Naive thymus-derived CD4-positive, alpha-beta T cell (primary cell): ENCODE measurements at regions of chr16 and their contacts with region 1.

Region 1: DNA sequence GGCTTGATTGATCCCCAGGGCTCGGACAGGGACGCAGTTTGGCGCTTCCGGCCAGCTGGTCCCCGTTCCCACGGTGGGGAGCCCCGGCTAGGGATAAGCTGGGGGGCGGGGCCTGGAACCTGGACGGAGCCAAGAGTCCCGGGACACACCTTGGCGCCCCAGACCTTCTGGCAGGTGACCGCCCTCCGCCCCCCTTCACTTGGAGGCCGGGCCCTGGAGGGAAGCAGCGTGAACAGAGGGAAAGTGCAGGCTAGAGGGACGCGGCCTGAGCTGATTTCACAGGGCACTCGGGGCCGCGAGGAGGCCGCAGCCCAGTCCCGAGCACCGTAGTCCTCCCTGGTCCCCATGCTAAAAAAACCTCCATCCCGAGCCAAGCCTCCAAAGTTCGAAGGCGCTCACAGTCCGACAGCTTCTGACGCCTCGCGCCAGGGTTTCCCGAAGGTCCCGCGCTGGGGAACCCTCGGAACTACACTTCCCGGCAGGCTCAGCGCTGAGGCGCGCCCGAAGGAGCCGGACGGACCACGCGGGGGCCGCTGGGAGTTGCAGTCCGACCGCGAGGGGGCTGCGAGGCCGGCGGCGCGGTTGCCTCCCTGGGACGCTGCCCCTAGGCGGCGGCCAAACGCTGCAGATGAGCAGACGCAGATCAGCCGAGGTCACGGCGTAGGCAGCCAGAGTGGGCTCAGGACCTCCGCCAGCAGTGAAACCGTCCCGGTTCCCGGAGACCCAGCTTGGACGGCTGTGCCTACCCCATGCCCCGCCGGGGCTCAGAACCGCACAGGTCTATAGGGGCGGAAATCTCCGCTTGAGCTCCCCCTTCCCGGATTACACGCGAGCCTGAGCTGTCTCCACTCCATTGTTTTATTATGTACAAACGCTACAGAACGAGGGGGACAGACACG is at the start of gene TBX6:
- DNase-seq: peak; percentile 85 to 96 (median 91)
- ATAC-seq: peak; percentile 87
- H3K4me3 ChIP-seq: peak within 1 kb of the TSS; percentile 60
- H3K4me3 Mint-ChIP-seq: peak within 1 kb of the TSS; percentile 87 to 96 (median 93)
- H3K27ac ChIP-seq: peak within 1 kb of the TSS; percentile 77
- H3K27ac Mint-ChIP-seq: peak within 1 kb of the TSS; percentile 92 to 97 (median 95)
- H3K4me1 ChIP-seq: peaks cover 32 to 47% of the 10 kb centered on the region in 2 donors
- H3K4me1 Mint-ChIP-seq: peaks cover 43 to 65% (median 50%) of the 10 kb centered on the region in 7 donors
- H3K27me3 ChIP-seq: no peaks in the 10 kb centered on the region
- H3K27me3 Mint-ChIP-seq: no peaks in the 10 kb centered on the region
- total RNA-seq, gene TBX6: 1.5 to 3.3 (median 1.6) TPM

Region 2: DNA sequence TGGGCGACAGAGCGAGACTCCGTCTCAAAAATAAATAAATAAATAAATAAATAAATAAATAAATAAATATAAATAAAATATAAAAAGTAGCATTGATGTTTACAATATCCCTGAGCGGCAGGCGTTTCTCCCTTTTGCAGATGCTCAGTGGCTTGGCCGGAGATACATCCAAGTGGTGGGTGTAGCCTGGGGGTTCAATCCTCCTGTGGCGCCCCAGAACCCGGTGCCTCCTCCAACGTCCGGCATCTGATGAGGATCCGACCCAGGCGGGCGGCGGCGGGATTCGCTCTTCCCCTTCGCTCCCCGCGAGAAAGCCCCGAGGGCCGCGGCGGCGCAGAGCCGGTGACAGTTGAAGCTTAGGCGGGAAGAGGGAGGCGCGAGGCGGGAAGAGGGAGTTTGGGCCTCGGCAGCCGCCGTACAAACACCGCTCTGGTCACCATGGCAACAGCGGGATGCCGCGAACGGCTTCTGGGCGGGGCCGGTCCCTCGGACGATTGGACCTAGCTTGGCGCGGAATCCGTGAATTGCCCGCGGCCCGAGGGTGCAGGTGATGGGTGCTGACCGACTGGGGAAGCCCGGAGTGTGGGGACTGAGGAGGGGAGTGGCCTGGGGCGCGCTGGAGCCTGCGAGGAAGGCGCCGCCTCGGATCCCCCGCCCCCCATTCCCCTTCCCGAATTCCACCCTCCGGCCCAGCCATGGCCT is 38.9 kb before region 1 on chr16:
- CTCF ChIA-PET with region 1: interaction called, 3 read pairs
- POLR2A ChIA-PET with region 1: interaction called, 8 read pairs
- intact Hi-C with region 1: loop called in 1 of 2 experiments (anchors 5 kb)
- DNase-seq: peak; percentile 70 to 96 (median 80)
- ATAC-seq: peak; percentile 87
- H3K4me3 ChIP-seq: peak overlapping the region; percentile 51
- H3K4me3 Mint-ChIP-seq: peak overlapping the region; percentile 82 to 90 (median 86)
- H3K27ac ChIP-seq: peak overlapping the region; percentile 51
- H3K27ac Mint-ChIP-seq: peak overlapping the region in 7 of 9 donors; percentile 58 to 86 (median 80)
- H3K4me1 ChIP-seq: peaks cover 4 to 5% of the 10 kb centered on the region in 2 donors
- H3K4me1 Mint-ChIP-seq: peaks cover 6 to 35% (median 24%) of the 10 kb centered on the region in 7 donors
- H3K27me3 ChIP-seq: no peaks in the 10 kb centered on the region
- H3K27me3 Mint-ChIP-seq: no peaks in the 10 kb centered on the region

Region 3: GRCh38 chr16:30112197-30113030 is 20.7 kb after region 1 on chr16:
- CTCF ChIA-PET with region 1: interaction called, 5 read pairs
- POLR2A ChIA-PET with region 1: interaction called, 18 read pairs
- intact Hi-C with region 1: no loop called
- DNase-seq: peak in 7 of 9 donors; percentile 31 to 76 (median 35)
- ATAC-seq: peak; percentile 60
- H3K4me3 ChIP-seq: no peak overlapping the region
- H3K4me3 Mint-ChIP-seq: no peak overlapping the region
- H3K27ac ChIP-seq: no peak overlapping the region
- H3K27ac Mint-ChIP-seq: peak overlapping the region in 2 of 9 donors; percentile 12 to 38
- H3K4me1 ChIP-seq: no peaks in the 10 kb centered on the region
- H3K4me1 Mint-ChIP-seq: peaks cover 6 to 15% (median 11%) of the 10 kb centered on the region in 7 donors
- H3K27me3 ChIP-seq: no peaks in the 10 kb centered on the region
- H3K27me3 Mint-ChIP-seq: no peaks in the 10 kb centered on the region

Region 4: GRCh38 chr16:30183233-30184095 is 91.7 kb after region 1 on chr16 and contains the start of gene CORO1A:
- CTCF ChIA-PET with region 1: interaction called, 16 read pairs
- POLR2A ChIA-PET with region 1: interaction called, 216 read pairs
- intact Hi-C with region 1: loop called in 1 of 2 experiments (anchors 1 kb)
- DNase-seq: peak; percentile 71 to 89 (median 85)
- ATAC-seq: peak; percentile 72
- H3K4me3 ChIP-seq: peak within 1 kb of the TSS; percentile 100
- H3K4me3 Mint-ChIP-seq: peak within 1 kb of the TSS; percentile 96 to 99 (median 98)
- H3K27ac ChIP-seq: peak within 1 kb of the TSS; percentile 85
- H3K27ac Mint-ChIP-seq: peak within 1 kb of the TSS; percentile 91 to 97 (median 96)
- H3K4me1 ChIP-seq: peaks cover 28 to 36% of the 10 kb centered on the region in 2 donors
- H3K4me1 Mint-ChIP-seq: peaks cover 19 to 36% (median 28%) of the 10 kb centered on the region in 7 donors
- H3K27me3 ChIP-seq: no peaks in the 10 kb centered on the region
- H3K27me3 Mint-ChIP-seq: no peaks in the 10 kb centered on the region
- total RNA-seq, gene CORO1A: 609 to 1,666 (median 826) TPM

Region 5: DNA sequence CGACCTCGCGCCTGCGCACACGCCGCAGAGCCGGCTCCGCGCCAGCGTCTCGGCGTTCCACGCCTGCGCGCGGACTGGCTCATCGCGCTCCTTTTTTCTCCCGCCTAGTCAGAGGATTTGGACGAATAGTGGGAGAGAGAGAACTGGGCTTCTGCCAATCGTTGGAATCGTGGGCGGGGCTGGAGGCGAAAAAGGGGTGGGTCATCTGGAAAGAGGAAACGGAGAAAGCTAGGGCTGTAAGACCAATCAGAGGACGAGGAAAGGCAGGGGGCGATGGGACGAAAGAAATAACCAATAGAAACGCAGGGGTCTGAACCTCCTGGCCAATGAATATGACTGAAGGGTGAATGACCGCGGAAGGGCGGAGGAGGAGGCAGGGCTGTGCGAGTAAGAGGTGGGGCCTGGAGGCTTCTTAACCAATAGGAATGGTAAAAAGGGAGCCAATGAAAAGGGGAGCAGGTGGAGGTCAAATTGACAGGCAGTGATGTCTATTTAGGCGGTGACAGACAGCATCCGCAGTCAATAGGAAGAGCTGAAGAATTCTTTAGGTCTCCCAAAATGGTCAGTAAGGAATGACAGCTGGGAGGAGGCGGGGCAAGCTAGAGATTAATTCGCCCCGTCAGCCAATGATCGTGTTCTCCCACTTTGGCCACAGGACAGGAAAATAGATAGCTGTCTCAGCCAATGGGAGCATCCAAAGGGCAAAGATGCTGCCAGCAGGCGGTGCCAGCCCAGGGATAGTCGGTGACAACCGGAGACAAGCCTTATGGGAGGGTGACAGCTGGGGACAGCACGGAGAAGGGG is 278.9 kb after region 1 on chr16 and contains the start of gene TBC1D10B:
- CTCF ChIA-PET with region 1: no interaction called
- POLR2A ChIA-PET with region 1: no interaction called
- intact Hi-C with region 1: loop called in 1 of 2 experiments (anchors 10 kb)
- DNase-seq: peak; percentile 89 to 100 (median 100)
- ATAC-seq: peak; percentile 91
- H3K4me3 ChIP-seq: peak within 1 kb of the TSS; percentile 76
- H3K4me3 Mint-ChIP-seq: peak within 1 kb of the TSS; percentile 83 to 92 (median 89)
- H3K27ac ChIP-seq: peak within 1 kb of the TSS; percentile 80
- H3K27ac Mint-ChIP-seq: peak within 1 kb of the TSS; percentile 63 to 98 (median 93)
- H3K4me1 ChIP-seq: peaks cover 24 to 25% of the 10 kb centered on the region in 2 donors
- H3K4me1 Mint-ChIP-seq: peaks cover 42 to 54% (median 50%) of the 10 kb centered on the region in 7 donors
- H3K27me3 ChIP-seq: no peaks in the 10 kb centered on the region
- H3K27me3 Mint-ChIP-seq: peaks cover 0 to 3% (median 0%) of the 10 kb centered on the region in 5 donors
- total RNA-seq, gene TBC1D10B: 23.2 to 70.0 (median 45.2) TPM

Region 6: DNA sequence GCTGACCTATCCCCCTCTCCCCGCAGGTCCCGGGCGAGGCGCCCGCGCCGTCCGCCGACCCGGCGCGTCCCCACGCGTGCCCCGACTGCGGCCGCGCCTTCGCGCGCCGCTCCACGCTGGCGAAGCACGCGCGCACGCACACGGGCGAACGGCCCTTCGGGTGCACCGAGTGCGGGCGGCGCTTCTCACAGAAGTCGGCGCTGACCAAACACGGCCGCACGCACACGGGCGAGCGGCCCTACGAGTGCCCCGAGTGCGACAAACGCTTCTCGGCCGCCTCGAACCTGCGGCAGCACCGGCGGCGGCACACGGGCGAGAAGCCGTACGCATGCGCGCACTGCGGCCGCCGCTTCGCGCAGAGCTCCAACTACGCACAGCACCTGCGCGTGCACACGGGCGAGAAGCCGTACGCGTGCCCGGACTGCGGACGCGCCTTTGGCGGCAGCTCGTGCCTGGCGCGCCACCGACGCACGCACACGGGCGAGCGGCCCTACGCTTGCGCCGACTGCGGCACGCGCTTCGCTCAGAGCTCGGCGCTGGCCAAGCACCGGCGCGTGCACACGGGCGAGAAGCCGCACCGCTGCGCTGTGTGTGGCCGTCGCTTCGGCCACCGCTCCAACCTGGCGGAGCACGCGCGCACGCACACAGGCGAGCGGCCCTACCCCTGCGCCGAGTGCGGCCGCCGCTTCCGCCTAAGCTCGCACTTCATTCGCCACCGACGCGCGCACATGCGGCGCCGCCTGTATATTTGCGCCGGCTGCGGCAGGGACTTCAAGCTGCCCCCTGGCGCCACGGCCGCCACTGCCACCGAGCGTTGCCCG is 326.0 kb after region 1 on chr16:
- CTCF ChIA-PET with region 1: interaction called, 3 read pairs
- POLR2A ChIA-PET with region 1: interaction called, 11 read pairs
- intact Hi-C with region 1: no loop called
- DNase-seq: peak; percentile 79 to 93 (median 88)
- ATAC-seq: peak; percentile 95
- H3K4me3 ChIP-seq: peak overlapping the region; percentile 76
- H3K4me3 Mint-ChIP-seq: peak overlapping the region; percentile 54 to 80 (median 70)
- H3K27ac ChIP-seq: peak overlapping the region; percentile 85
- H3K27ac Mint-ChIP-seq: peak overlapping the region in 7 of 9 donors; percentile 69 to 88 (median 81)
- H3K4me1 ChIP-seq: peaks cover 6 to 8% of the 10 kb centered on the region in 2 donors
- H3K4me1 Mint-ChIP-seq: peaks cover 12 to 31% (median 14%) of the 10 kb centered on the region in 7 donors
- H3K27me3 ChIP-seq: no peaks in the 10 kb centered on the region
- H3K27me3 Mint-ChIP-seq: no peaks in the 10 kb centered on the region

Region 7: DNA sequence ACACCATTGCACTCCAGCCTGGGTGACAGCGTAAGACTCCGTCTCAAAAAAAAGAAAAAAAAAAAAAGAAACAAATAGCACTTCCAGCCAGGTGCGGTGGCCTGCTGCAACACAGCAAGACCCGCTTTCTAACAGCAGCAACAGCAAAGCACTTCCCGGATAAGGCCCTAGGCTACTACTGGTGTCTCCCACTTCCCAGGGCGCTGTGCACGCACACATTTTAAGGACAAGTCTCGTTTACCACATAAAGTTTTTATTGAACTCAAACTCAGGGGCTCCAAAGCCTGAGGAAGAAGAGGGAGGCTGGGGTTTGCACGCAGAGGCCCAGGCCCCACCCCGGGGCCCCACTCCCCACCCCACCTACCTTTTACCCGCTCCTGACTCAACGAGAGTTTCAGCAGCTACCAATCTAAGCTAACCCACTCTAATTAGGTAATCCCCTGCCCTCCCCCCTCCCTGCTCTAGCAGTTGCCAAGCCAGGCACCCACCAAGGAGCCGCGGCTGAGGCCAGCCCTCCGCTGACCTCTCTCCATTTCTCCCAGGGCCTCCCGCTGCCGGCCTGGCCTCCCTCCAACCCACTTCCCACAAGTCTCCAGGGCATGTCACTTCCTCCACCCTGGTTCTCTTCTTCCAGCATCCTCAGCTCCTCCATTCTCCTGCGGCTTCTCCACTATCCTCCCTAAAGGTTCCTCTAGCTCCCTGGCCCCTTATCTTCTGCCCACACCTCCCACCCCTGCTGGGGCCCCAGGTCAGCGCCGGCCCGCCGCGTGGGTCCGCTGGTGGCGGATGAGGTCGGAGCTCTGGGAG is 432.2 kb after region 1 on chr16:
- CTCF ChIA-PET with region 1: no interaction called
- POLR2A ChIA-PET with region 1: no interaction called
- intact Hi-C with region 1: no loop called
- DNase-seq: no peak
- ATAC-seq: no peak
- H3K4me3 ChIP-seq: no peak overlapping the region
- H3K4me3 Mint-ChIP-seq: peak overlapping the region in 1 of 10 donors; percentile 40
- H3K27ac ChIP-seq: no peak overlapping the region
- H3K27ac Mint-ChIP-seq: no peak overlapping the region
- H3K4me1 ChIP-seq: peaks cover 0 to 7% of the 10 kb centered on the region in 2 donors
- H3K4me1 Mint-ChIP-seq: peaks cover 14 to 29% (median 21%) of the 10 kb centered on the region in 7 donors
- H3K27me3 ChIP-seq: no peaks in the 10 kb centered on the region
- H3K27me3 Mint-ChIP-seq: no peaks in the 10 kb centered on the region

Region 8: DNA sequence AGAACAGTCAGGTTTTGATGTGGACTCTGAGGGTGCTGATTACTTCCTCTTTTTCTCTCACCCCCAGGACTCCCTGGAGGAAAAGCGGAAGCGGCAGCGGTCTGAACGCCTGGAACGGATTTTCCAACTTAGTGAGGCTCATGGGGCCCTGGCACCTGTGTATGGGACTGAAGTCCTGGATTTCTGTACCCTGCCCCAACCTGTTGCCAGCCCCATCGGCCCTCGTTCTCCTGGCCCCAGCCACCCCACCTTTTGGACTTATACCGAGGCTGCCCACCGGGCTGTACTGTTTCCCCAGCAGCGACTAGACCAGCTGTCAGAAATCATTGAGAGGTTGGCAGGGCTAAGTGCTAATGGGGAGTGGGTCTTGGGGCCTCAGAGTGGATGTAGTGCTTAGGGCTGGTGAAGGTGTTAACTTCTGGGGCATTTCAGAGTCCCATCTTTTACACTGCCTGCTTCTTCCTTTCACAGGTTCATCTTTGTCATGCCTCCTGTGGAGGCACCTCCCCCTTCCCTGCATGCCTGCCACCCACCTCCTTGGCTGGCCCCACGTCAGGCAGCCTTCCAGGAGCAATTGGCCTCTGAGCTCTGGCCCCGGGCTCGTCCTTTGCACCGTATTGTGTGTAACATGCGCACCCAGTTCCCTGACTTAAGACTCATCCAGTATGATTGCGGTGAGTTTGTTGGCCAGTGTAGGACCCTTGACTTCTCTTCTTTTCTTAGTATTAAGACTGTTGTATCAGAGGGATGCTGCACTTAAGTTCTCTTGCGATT is 637.4 kb after region 1 on chr16:
- CTCF ChIA-PET with region 1: no interaction called
- POLR2A ChIA-PET with region 1: no interaction called
- intact Hi-C with region 1: no loop called
- DNase-seq: no peak
- ATAC-seq: no peak
- H3K4me3 ChIP-seq: no peak overlapping the region
- H3K4me3 Mint-ChIP-seq: no peak overlapping the region
- H3K27ac ChIP-seq: no peak overlapping the region
- H3K27ac Mint-ChIP-seq: peak overlapping the region in 2 of 9 donors; percentile 29 to 50
- H3K4me1 ChIP-seq: no peaks in the 10 kb centered on the region
- H3K4me1 Mint-ChIP-seq: peaks cover 0 to 15% (median 5%) of the 10 kb centered on the region in 7 donors
- H3K27me3 ChIP-seq: no peaks in the 10 kb centered on the region
- H3K27me3 Mint-ChIP-seq: no peaks in the 10 kb centered on the region

Region 9: GRCh38 chr16:31099860-31100638 is 1008.3 kb after region 1 on chr16:
- CTCF ChIA-PET with region 1: no interaction called
- POLR2A ChIA-PET with region 1: no interaction called
- intact Hi-C with region 1: no loop called
- DNase-seq: no peak
- ATAC-seq: no peak
- H3K4me3 ChIP-seq: no peak overlapping the region
- H3K4me3 Mint-ChIP-seq: no peak overlapping the region
- H3K27ac ChIP-seq: no peak overlapping the region
- H3K27ac Mint-ChIP-seq: no peak overlapping the region
- H3K4me1 ChIP-seq: peaks cover 7 to 8% of the 10 kb centered on the region in 2 donors
- H3K4me1 Mint-ChIP-seq: peaks cover 7 to 14% (median 12%) of the 10 kb centered on the region in 7 donors
- H3K27me3 ChIP-seq: no peaks in the 10 kb centered on the region
- H3K27me3 Mint-ChIP-seq: no peaks in the 10 kb centered on the region